HCT116 (cell line): ENCODE measurements at regions of chr5 and their contacts with region 1.

Region 1: GRCh38 chr5:112419986-112420864 is 1.1 kb upstream of the EPB41L4A start:
- DNase-seq: peak; percentile 56
- ATAC-seq: peak; percentile 91
- H3K4me3 ChIP-seq: peak overlapping the region; percentile 63 to 67
- H3K27ac ChIP-seq: peak overlapping the region; percentile 46; the same call in 1 of the 2 replicates
- H3K4me1 ChIP-seq: peaks cover 0 to 15% of the 10 kb centered on the region in 2 experiments; a peak in 1 of 4 replicates
- H3K27me3 ChIP-seq: peaks cover 4% of the 10 kb centered on the region; the same call in 1 of the 2 replicates
- CTCF ChIP-seq: peak; percentile 85 to 90 (median 89)
- POLR2A ChIP-seq: no peak
- RAD21 ChIP-seq: peak; percentile 88

Region 2: DNA sequence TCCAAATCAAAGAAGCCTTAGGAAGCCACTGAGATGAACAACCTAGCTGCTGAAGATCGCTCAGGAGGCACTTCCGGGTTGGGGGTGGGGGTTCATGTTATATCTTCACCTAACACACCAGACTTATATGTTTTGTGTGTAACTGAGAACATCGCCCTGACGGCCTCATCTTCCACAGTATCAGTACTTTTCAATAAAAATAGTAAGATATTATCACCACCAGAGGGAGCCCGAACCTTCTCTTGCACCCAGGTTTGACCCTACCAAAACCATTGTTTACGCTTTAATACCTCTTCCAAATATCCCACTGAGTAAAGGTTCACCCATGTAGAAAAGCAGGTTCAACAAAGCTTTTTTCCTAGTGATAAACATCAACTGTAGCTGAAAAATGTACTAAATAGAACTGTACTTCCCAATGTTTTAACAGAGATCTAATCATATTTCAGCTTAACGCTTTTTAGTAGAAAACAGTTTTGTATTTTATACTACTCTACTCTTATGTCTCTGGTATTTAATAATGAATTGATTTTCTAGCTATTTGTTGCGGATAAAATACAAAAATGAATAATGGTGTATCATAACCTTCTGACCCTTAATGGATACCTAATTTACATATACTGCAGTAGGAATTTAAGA is 245.1 kb before region 1 on chr5:
- CTCF ChIA-PET with region 1: interaction called, 52 read pairs
- POLR2A ChIA-PET with region 1: no interaction called
- RAD21 ChIA-PET with region 1: interaction called in 1 of 2 experiments, 5 read pairs
- intact Hi-C with region 1: loop called (anchors 1 kb)
- DNase-seq: peak; percentile 61
- ATAC-seq: peak; percentile 89
- H3K4me3 ChIP-seq: peak overlapping the region in 1 of 2 experiments; percentile 22; a peak in 1 of 4 replicates
- H3K27ac ChIP-seq: no peak overlapping the region
- H3K4me1 ChIP-seq: peaks cover 2 to 3% of the 10 kb centered on the region in 2 experiments; a peak in 2 of 4 replicates
- H3K27me3 ChIP-seq: no peaks in the 10 kb centered on the region
- CTCF ChIP-seq: peak; percentile 55 to 85 (median 78)
- POLR2A ChIP-seq: no peak
- RAD21 ChIP-seq: peak; percentile 83

Region 3: GRCh38 chr5:112210430-112211005 is 209.7 kb before region 1 on chr5:
- CTCF ChIA-PET with region 1: interaction called, 22 read pairs
- POLR2A ChIA-PET with region 1: no interaction called
- RAD21 ChIA-PET with region 1: interaction called in 1 of 2 experiments, 4 read pairs
- intact Hi-C with region 1: loop called (anchors 1 kb)
- DNase-seq: peak; percentile 16
- ATAC-seq: peak; percentile 82
- H3K4me3 ChIP-seq: no peak overlapping the region
- H3K27ac ChIP-seq: no peak overlapping the region
- H3K4me1 ChIP-seq: no peaks in the 10 kb centered on the region
- H3K27me3 ChIP-seq: no peaks in the 10 kb centered on the region
- CTCF ChIP-seq: peak; percentile 69 to 77 (median 71); a peak in 5 of 6 replicates
- POLR2A ChIP-seq: no peak
- RAD21 ChIP-seq: peak; percentile 83

Region 4: DNA sequence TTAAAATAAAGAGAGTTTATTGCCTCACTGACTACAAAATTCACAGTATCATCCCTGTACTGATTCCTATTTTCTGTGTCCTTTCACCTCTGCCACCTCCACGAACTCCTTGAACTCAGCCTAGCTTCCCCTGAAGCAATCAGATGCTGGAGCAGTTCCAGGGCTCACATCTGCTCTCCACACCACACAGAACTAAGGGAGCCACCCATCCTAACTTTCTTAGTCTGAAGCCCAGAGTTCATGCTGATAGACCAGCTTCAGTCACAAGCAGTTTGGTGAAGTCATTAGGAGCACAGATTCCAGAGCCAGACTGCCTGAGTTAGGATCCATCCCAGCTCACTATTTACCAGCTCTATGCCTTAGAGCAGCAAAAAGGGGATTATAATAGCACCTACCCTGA is 14.4 kb after region 1 on chr5:
- CTCF ChIA-PET with region 1: interaction called, 10 read pairs
- POLR2A ChIA-PET with region 1: interaction called, 4 read pairs
- RAD21 ChIA-PET with region 1: no interaction called
- intact Hi-C with region 1: no loop called
- DNase-seq: no peak
- ATAC-seq: no peak
- H3K4me3 ChIP-seq: no peak overlapping the region
- H3K27ac ChIP-seq: no peak overlapping the region
- H3K4me1 ChIP-seq: no peaks in the 10 kb centered on the region
- H3K27me3 ChIP-seq: peaks cover 6% of the 10 kb centered on the region; the same call in 1 of the 2 replicates
- CTCF ChIP-seq: no peak
- POLR2A ChIP-seq: no peak
- RAD21 ChIP-seq: no peak

Region 5: GRCh38 chr5:112757468-112758208 is 337.4 kb after region 1 on chr5:
- CTCF ChIA-PET with region 1: interaction called, 6 read pairs
- POLR2A ChIA-PET with region 1: no interaction called
- RAD21 ChIA-PET with region 1: no interaction called
- intact Hi-C with region 1: loop called (anchors 10 kb)
- DNase-seq: peak; percentile 48
- ATAC-seq: peak; percentile 83
- H3K4me3 ChIP-seq: no peak overlapping the region
- H3K27ac ChIP-seq: no peak overlapping the region
- H3K4me1 ChIP-seq: peaks cover 4 to 5% of the 10 kb centered on the region in 2 experiments
- H3K27me3 ChIP-seq: no peaks in the 10 kb centered on the region
- CTCF ChIP-seq: peak; percentile 64 to 78 (median 76)
- POLR2A ChIP-seq: no peak
- RAD21 ChIP-seq: peak; percentile 87